Activated B cell treated with CpG ODN at 0.5 μM for 24 hours (primary cell): ENCODE measurements at regions of chr13 and their contacts with region 1.

Region 1: GRCh38 chr13:32031025-32031814 is at the start of gene FRY:
- DNase-seq: peak; percentile 42
- ATAC-seq: peak; percentile 75
- H3K4me3 Mint-ChIP-seq: peak within 1 kb of the TSS; percentile 94
- H3K27ac Mint-ChIP-seq: peak within 1 kb of the TSS; percentile 61
- H3K4me1 Mint-ChIP-seq: peaks cover 26% of the 10 kb centered on the region
- H3K27me3 Mint-ChIP-seq: peaks cover 7% of the 10 kb centered on the region
- CTCF ChIP-seq: no peak
- total RNA-seq, gene FRY: 4.7 and 4.8 TPM in 2 replicates

Region 2: GRCh38 chr13:32019612-32020233 is 11.5 kb before region 1 on chr13:
- CTCF ChIA-PET with region 1: interaction called, 3 read pairs
- POLR2A ChIA-PET with region 1: no interaction called
- intact Hi-C with region 1: loop called (anchors 1 kb)
- DNase-seq: no peak
- ATAC-seq: peak; percentile 85
- H3K4me3 Mint-ChIP-seq: no peak overlapping the region
- H3K27ac Mint-ChIP-seq: no peak overlapping the region
- H3K4me1 Mint-ChIP-seq: no peaks in the 10 kb centered on the region
- H3K27me3 Mint-ChIP-seq: no peaks in the 10 kb centered on the region
- CTCF ChIP-seq: no peak

Region 3: GRCh38 chr13:32045982-32046785 is 15.0 kb after region 1 on chr13:
- CTCF ChIA-PET with region 1: no interaction called
- POLR2A ChIA-PET with region 1: interaction called, 10 read pairs
- intact Hi-C with region 1: loop called (anchors 2 kb)
- DNase-seq: no peak
- ATAC-seq: peak; percentile 54
- H3K4me3 Mint-ChIP-seq: peak overlapping the region; percentile 63
- H3K27ac Mint-ChIP-seq: peak overlapping the region; percentile 48
- H3K4me1 Mint-ChIP-seq: peaks cover 42% of the 10 kb centered on the region
- H3K27me3 Mint-ChIP-seq: no peaks in the 10 kb centered on the region
- CTCF ChIP-seq: no peak

Region 4: DNA sequence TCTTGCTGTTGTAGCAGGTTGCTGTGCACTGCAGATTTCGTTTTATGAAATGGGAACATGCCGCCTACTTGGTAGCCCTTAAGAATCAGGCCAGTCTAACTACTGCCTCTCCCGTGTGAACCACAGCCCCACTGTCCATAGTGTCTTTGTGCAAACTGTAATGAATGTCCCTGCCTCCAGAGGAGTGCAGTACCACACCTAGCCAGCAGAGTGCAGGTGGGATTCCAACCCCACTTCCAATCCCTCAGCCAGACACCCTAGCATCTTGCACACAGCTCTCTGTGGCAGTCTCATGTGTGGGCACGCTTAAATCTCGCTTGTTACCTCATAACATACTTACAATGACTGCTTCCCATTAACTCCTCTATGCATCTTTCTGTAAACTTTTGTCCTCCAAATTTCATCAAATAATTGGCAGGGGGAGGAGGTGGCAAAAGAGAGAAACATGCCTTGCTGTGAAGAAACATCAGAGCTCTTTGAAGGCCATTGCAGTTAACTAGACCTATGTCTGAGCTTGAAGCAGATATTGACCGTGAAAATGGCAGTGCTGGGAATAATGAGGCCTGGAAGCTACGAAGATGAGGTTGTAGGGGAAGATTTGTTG is 236.7 kb after region 1 on chr13:
- CTCF ChIA-PET with region 1: no interaction called
- POLR2A ChIA-PET with region 1: no interaction called
- intact Hi-C with region 1: no loop called
- DNase-seq: peak; percentile 22
- ATAC-seq: peak; percentile 93
- H3K4me3 Mint-ChIP-seq: no peak overlapping the region
- H3K27ac Mint-ChIP-seq: no peak overlapping the region
- H3K4me1 Mint-ChIP-seq: no peaks in the 10 kb centered on the region
- H3K27me3 Mint-ChIP-seq: no peaks in the 10 kb centered on the region
- CTCF ChIP-seq: peak; percentile 67

Region 5: GRCh38 chr13:32427852-32428580 is 396.8 kb after region 1 on chr13 and contains the start of gene N4BP2L1:
- CTCF ChIA-PET with region 1: no interaction called
- POLR2A ChIA-PET with region 1: interaction called, 3 read pairs
- intact Hi-C with region 1: loop called (anchors 5 kb)
- DNase-seq: peak; percentile 77
- ATAC-seq: peak; percentile 73
- H3K4me3 Mint-ChIP-seq: peak within 1 kb of the TSS; percentile 95
- H3K27ac Mint-ChIP-seq: peak within 1 kb of the TSS; percentile 99
- H3K4me1 Mint-ChIP-seq: peaks cover 48% of the 10 kb centered on the region
- H3K27me3 Mint-ChIP-seq: no peaks in the 10 kb centered on the region
- CTCF ChIP-seq: no peak
- total RNA-seq, gene N4BP2L1: 23.0 and 24.3 TPM in 2 replicates